ENCODE measurements at regions of chr9 and their contacts with region 1.

Region 1: DNA sequence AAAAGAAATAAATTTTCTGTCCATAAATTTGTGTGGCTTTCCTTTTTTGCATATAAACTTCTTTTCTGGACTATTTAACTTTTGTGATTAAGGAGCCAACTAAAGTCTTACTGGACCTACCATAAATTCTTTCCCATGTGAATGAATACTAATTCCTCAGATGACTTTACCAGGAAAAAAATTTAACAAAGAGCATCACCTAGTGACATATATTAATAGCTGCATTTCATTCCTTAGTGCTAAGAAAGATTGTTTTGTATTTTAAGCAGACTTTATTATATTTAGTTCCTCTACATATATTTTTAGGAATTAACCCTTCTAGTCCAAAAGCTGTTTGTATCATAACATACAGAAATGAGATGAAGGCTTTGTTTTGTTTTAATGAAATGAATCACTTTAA is 64.4 kb downstream of the C9orf85 start:
- DNase-seq: no peak
- H3K4me3 ChIP-seq: no peak overlapping the region
- CTCF ChIP-seq: peak; percentile 12

Region 2: GRCh38 chr9:71812385-71812784 is 163.4 kb before region 1 on chr9:
- CTCF ChIA-PET with region 1: interaction called, 69 read pairs
- POLR2A ChIA-PET with region 1: no interaction called
- DNase-seq: no peak
- H3K4me3 ChIP-seq: no peak overlapping the region
- CTCF ChIP-seq: peak; percentile 6

Region 3: DNA sequence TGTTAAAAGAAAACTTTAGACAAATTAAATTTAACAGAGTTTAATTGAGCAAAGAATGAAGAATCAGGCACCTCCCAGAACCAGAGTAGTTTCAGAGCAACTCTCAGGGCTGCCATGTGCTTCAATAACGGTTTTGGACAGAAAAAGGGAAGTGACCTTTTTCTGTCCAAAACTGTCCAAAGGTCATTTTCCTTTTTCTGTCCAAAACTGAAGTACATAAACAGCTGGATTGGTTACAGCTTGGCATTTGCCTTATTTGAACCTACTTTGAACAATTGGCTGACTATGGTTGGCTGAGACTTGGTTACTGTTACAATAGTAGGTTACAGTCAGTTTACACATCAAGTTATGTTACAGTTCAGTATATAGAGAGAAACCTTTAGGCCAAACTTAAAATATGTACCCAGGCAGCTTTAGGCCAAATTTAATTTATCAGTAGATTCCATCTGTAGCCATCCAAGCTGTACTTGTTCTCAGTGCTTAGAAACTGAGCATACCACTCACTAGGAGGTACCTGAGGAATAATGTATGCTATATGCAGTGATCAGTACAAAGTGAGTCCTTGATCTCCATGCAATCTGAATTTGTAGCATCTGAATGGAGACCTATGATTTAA is 20.4 kb before region 1 on chr9:
- CTCF ChIA-PET with region 1: no interaction called
- POLR2A ChIA-PET with region 1: no interaction called
- DNase-seq: no peak
- H3K4me3 ChIP-seq: no peak overlapping the region
- CTCF ChIP-seq: no peak

Region 4: DNA sequence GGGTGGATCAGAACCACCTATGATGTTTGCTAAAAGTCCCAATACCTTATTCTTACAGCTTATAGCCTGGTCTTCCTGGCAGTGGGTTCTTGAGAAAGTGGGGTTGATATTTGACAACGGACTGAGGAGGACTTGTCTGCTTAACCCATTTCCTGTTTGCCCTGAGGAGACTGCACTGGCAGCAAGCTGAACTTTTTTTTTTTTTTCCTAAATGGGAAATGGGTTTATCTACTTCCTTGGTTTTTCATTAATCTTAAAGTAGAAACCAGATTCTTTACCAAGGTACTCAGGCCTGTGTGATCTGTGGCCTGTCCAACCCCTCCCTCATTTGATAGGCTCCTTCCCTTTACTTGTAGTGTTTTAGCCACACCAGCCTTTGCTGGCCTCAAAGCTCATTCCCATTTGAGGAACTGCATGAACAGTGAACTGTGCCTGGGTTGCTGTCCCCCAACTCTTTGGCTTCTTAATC is 37.5 kb after region 1 on chr9:
- CTCF ChIA-PET with region 1: no interaction called
- POLR2A ChIA-PET with region 1: no interaction called
- DNase-seq: no peak
- H3K4me3 ChIP-seq: no peak overlapping the region
- CTCF ChIP-seq: no peak

Region 5: GRCh38 chr9:72129271-72130156 is 153.7 kb after region 1 on chr9:
- CTCF ChIA-PET with region 1: no interaction called
- POLR2A ChIA-PET with region 1: no interaction called
- DNase-seq: no peak
- H3K4me3 ChIP-seq: no peak overlapping the region
- CTCF ChIP-seq: no peak

Measured in AG04449 (cell line).